Mammary epithelial cell (primary cell): ENCODE measurements at regions of chr7 and their contacts with region 1.

Region 1: DNA sequence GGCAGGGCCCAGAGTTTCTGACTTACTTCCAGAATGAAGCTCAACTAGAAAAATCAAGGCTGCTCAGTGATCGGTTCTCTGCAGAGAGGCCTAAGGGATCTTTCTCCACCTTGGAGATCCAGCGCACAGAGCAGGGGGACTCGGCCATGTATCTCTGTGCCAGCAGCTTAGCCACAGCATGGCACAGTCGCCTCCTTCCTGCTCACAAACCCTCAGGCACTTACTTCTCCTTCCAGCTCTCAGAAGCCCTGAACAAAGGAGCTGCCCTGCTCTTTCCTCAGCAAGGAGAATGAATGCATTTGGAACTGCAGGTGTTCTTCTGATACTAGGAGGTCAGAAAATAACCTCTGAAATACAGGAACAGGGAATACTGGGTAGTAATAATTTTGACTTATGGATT is 219.7 kb upstream of the PRSS1 start:
- DNase-seq: no peak
- H3K4me3 ChIP-seq: no peak overlapping the region
- H3K27ac ChIP-seq: no peak overlapping the region
- H3K4me1 ChIP-seq: no peaks in the 10 kb centered on the region
- H3K27me3 ChIP-seq: no peaks in the 10 kb centered on the region
- CTCF ChIP-seq: no peak

Region 2: GRCh38 chr7:143287935-143288826 is 758.6 kb after region 1 on chr7 and contains the start of gene CASP2:
- CTCF ChIA-PET with region 1: interaction called, 18 read pairs
- dilution Hi-C with region 1: no loop called
- in situ Hi-C with region 1: no loop called
- intact Hi-C with region 1: no loop called
- DNase-seq: peak; percentile 97
- H3K4me3 ChIP-seq: peak within 1 kb of the TSS; percentile 64 to 87 (median 78)
- H3K27ac ChIP-seq: peak within 1 kb of the TSS; percentile 86
- H3K4me1 ChIP-seq: peaks cover 41% of the 10 kb centered on the region
- H3K27me3 ChIP-seq: no peaks in the 10 kb centered on the region
- CTCF ChIP-seq: peak in 1 of 2 donors; percentile 34
- total RNA-seq, gene CASP2: 18.3 to 43.5 TPM